ENCODE measurements at regions of chrX and their contacts with region 1.

Region 1: DNA sequence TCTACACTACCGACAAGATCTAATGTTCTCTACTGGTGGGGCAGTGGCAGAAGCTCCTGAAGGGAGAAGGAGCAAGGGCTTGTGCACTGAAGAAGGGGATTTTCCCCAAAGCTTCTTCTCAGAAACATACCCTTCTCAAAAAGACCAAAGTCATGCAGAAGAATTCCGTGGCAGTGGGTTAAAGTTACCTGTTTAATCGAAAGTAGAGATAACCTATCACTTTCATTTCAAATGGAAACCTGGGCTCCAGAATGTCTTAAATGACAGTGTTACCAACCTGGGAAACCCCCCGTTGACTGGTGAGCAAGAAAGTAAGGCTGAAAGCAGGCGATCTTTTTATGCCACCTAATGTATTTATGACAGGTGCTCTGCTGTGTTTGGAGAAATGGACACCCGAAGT is 92.5 kb upstream of the TEX13D start:
- DNase-seq: peak; percentile 72
- ATAC-seq: peak; percentile 79
- H3K4me3 Mint-ChIP-seq: peak overlapping the region; percentile 31
- H3K27ac Mint-ChIP-seq: peak overlapping the region; percentile 75
- H3K4me1 Mint-ChIP-seq: peaks cover 45% of the 10 kb centered on the region
- H3K27me3 Mint-ChIP-seq: peaks cover 2% of the 10 kb centered on the region

Region 2: DNA sequence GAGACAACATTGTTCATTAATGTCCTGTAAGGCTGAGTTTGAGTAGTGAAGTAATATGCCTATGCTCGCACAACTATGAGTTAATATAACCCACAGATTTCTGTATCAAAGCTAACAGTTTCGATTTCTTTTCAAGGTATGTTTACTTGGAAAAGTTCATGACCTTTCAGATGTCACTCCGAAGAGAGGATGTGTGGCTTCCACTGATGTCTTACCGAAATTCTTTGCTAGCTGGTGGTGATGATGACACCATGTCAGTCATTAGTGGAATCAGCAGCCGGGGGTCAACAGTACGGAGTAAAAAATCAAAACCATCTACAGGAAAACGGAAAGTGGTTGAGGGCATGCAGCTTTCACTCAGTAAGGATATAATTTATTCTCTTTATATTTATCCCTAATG is 153.5 kb before region 1 on chrX:
- CTCF ChIA-PET with region 1: no interaction called
- POLR2A ChIA-PET with region 1: no interaction called
- intact Hi-C with region 1: loop called in 1 of 2 experiments (anchors 5 kb)
- DNase-seq: peak; percentile 58
- ATAC-seq: peak; percentile 96
- H3K4me3 Mint-ChIP-seq: peak overlapping the region; percentile 16
- H3K27ac Mint-ChIP-seq: peak overlapping the region; percentile 66
- H3K4me1 Mint-ChIP-seq: peaks cover 22% of the 10 kb centered on the region
- H3K27me3 Mint-ChIP-seq: no peaks in the 10 kb centered on the region

Region 3: GRCh38 chrX:124280294-124280902 is 40.5 kb after region 1 on chrX:
- CTCF ChIA-PET with region 1: no interaction called
- POLR2A ChIA-PET with region 1: no interaction called
- intact Hi-C with region 1: loop called in 1 of 2 experiments (anchors 5 kb)
- DNase-seq: no peak
- ATAC-seq: no peak
- H3K4me3 Mint-ChIP-seq: no peak overlapping the region
- H3K27ac Mint-ChIP-seq: peak overlapping the region; percentile 26
- H3K4me1 Mint-ChIP-seq: peaks cover 24% of the 10 kb centered on the region
- H3K27me3 Mint-ChIP-seq: no peaks in the 10 kb centered on the region

Region 4: GRCh38 chrX:124300405-124300804 is 60.5 kb after region 1 on chrX:
- CTCF ChIA-PET with region 1: no interaction called
- POLR2A ChIA-PET with region 1: no interaction called
- intact Hi-C with region 1: loop called (anchors 1 to 2 kb)
- DNase-seq: no peak
- ATAC-seq: peak; percentile 70
- H3K4me3 Mint-ChIP-seq: peak overlapping the region; percentile 38
- H3K27ac Mint-ChIP-seq: peak overlapping the region; percentile 60
- H3K4me1 Mint-ChIP-seq: peaks cover 19% of the 10 kb centered on the region
- H3K27me3 Mint-ChIP-seq: no peaks in the 10 kb centered on the region

Region 5: DNA sequence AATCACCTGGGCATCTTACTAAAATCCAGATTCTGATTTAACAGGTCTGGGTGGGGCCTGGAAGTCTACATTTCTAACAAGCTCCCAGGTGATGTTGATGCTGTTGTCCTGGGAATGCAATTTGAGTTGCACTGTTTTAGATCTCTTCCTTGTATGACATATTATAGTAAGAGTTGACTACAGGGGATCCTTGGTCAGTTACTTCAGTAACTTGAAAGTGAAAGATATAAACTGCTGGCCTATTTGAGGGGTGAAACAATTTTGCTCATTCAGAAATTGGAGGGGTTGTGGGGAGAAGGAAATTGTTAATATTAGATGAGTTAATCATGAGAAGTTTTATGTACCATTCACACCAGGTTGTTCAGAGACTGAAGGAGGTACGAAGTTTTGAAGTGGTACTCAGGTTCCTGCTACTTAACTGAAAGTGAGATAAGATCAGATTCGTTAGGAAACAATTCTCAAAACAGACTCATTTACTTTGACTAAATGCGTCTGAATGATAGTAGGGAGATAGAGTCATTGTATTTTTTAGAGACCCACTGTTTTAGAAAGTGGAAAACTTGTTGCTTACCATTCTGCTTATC is 119.0 kb after region 1 on chrX:
- CTCF ChIA-PET with region 1: interaction called, 4 read pairs
- POLR2A ChIA-PET with region 1: no interaction called
- intact Hi-C with region 1: loop called in 1 of 2 experiments (anchors 1 kb)
- DNase-seq: no peak
- ATAC-seq: peak; percentile 69
- H3K4me3 Mint-ChIP-seq: peak overlapping the region; percentile 68
- H3K27ac Mint-ChIP-seq: peak overlapping the region; percentile 84
- H3K4me1 Mint-ChIP-seq: peaks cover 53% of the 10 kb centered on the region
- H3K27me3 Mint-ChIP-seq: no peaks in the 10 kb centered on the region

Region 6: GRCh38 chrX:125295337-125295736 is 1055.4 kb after region 1 on chrX:
- CTCF ChIA-PET with region 1: no interaction called
- POLR2A ChIA-PET with region 1: no interaction called
- intact Hi-C with region 1: loop called (anchors 2 to 10 kb)
- DNase-seq: no peak
- ATAC-seq: peak; percentile 74
- H3K4me3 Mint-ChIP-seq: peak overlapping the region; percentile 26
- H3K27ac Mint-ChIP-seq: peak overlapping the region; percentile 82
- H3K4me1 Mint-ChIP-seq: peaks cover 21% of the 10 kb centered on the region
- H3K27me3 Mint-ChIP-seq: no peaks in the 10 kb centered on the region